ENCODE measurements at regions of chr2 and their contacts with region 1.

Region 1: DNA sequence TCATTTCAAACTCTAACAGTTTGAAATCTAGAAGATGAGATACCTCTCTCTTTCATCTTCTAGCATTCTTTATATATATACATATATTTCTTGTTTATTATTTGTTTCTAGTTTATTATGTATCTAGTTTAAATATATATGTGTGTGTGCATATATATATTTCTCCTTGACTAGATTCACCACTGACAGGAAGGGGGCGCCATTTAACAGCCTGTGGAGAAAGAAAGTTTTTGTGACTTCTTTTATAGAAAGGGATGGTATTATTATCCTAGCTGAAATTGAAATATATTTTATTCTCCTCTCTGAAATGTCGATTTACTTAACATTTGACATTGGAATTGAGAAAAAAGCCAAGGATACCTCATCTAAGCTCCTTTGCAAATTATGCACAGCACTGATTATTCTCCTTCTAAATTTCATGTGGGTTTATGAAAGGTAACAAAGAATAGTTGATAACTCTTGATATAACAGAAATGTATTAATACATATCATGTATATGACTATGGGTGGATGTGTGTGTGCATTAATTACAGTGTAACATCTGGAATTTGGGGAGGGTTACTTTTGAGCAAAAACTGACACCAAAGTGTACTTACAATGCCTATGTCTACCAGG is 160.7 kb upstream of the NT5C1B start:
- DNase-seq: peak in 1 of 2 donors; percentile 53
- H3K4me3 ChIP-seq: no peak overlapping the region
- CTCF ChIP-seq: no peak
- POLR2A ChIP-seq: no peak

Region 2: DNA sequence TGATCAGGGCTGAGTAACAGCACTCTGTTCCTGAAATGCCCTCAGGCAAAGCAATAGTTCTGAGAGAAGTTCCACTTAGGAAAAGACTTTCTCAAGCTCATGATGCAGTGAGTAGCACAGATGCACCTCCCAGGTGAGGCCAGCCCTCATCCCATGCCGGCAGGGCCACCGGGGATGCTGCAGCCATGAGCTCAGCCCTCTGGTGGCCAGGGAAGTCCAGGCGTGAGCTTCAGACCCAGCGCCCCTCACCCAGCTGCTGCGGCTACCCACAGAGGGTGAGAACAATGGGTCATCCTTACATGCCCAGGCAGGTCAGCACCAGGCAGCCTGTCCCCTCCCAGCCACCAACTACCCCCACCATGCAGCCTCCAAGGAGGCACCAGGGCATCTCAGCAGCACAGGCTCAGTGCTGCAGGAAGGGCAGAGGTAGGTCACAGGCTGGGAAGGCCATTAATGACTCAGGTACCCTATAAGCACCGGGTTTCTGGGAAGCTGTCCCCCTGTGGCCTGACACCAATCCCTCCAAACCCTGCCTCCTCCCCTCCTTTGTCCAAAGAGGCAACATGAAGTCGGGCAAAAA is 1101.2 kb after region 1 on chr2:
- intact Hi-C with region 1: loop called (anchors 10 kb)
- DNase-seq: peak in 1 of 2 donors; percentile 58
- H3K4me3 ChIP-seq: no peak overlapping the region
- CTCF ChIP-seq: no peak
- POLR2A ChIP-seq: no peak